ENCODE measurements at regions of chr2 and their contacts with region 1.

Region 1: GRCh38 chr2:55779459-55780421 is 86.1 kb upstream of the PNPT1 start:
- DNase-seq: no peak
- H3K4me3 ChIP-seq: no peak overlapping the region
- H3K27ac ChIP-seq: no peak overlapping the region
- H3K4me1 ChIP-seq: no peaks in the 10 kb centered on the region
- H3K27me3 ChIP-seq: no peaks in the 10 kb centered on the region
- CTCF ChIP-seq: no peak
- EP300 ChIP-seq: no peak
- POLR2A ChIP-seq: no peak

Region 2: DNA sequence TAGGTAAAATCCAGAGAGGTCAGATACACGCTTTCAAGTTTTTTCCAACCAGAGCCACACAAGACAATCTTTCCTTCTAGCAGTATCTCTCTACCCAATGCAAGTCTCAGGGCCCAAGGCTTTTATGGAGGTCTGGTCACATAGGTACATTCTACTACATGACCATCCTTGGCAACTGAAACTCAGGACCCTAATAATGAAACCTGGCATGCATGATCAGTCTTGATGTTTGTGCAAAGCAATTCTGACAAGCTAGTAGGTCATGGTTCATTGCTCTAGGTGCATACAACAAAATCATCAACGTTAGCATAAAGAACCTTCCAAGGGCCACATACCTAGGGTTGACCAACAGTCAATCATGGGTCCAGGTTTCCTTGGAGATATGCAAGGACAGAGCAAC is 326.9 kb before region 1 on chr2:
- intact Hi-C with region 1: no loop called
- DNase-seq: no peak
- H3K4me3 ChIP-seq: no peak overlapping the region
- H3K27ac ChIP-seq: no peak overlapping the region
- H3K4me1 ChIP-seq: no peaks in the 10 kb centered on the region
- H3K27me3 ChIP-seq: no peaks in the 10 kb centered on the region
- CTCF ChIP-seq: no peak
- EP300 ChIP-seq: no peak
- POLR2A ChIP-seq: no peak

Region 3: GRCh38 chr2:55961318-55961911 is 181.7 kb after region 1 on chr2:
- intact Hi-C with region 1: loop called in 1 of 4 experiments (anchors 5 kb)
- DNase-seq: peak in 1 of 5 donors; percentile 24
- H3K4me3 ChIP-seq: no peak overlapping the region
- H3K27ac ChIP-seq: no peak overlapping the region
- H3K4me1 ChIP-seq: peaks cover 7% of the 10 kb centered on the region
- H3K27me3 ChIP-seq: no peaks in the 10 kb centered on the region
- CTCF ChIP-seq: peak; percentile 30 to 66 (median 49)
- EP300 ChIP-seq: no peak
- POLR2A ChIP-seq: no peak

Region 4: GRCh38 chr2:57278451-57278850 is 1498.7 kb after region 1 on chr2:
- intact Hi-C with region 1: no loop called
- DNase-seq: no peak
- H3K4me3 ChIP-seq: no peak overlapping the region
- H3K27ac ChIP-seq: no peak overlapping the region
- H3K4me1 ChIP-seq: no peaks in the 10 kb centered on the region
- H3K27me3 ChIP-seq: no peaks in the 10 kb centered on the region
- CTCF ChIP-seq: no peak
- EP300 ChIP-seq: no peak
- POLR2A ChIP-seq: no peak

Measured in ovary (tissue), 10 donors.